ENCODE measurements at regions of chr1 and their contacts with region 1.

Region 1: DNA sequence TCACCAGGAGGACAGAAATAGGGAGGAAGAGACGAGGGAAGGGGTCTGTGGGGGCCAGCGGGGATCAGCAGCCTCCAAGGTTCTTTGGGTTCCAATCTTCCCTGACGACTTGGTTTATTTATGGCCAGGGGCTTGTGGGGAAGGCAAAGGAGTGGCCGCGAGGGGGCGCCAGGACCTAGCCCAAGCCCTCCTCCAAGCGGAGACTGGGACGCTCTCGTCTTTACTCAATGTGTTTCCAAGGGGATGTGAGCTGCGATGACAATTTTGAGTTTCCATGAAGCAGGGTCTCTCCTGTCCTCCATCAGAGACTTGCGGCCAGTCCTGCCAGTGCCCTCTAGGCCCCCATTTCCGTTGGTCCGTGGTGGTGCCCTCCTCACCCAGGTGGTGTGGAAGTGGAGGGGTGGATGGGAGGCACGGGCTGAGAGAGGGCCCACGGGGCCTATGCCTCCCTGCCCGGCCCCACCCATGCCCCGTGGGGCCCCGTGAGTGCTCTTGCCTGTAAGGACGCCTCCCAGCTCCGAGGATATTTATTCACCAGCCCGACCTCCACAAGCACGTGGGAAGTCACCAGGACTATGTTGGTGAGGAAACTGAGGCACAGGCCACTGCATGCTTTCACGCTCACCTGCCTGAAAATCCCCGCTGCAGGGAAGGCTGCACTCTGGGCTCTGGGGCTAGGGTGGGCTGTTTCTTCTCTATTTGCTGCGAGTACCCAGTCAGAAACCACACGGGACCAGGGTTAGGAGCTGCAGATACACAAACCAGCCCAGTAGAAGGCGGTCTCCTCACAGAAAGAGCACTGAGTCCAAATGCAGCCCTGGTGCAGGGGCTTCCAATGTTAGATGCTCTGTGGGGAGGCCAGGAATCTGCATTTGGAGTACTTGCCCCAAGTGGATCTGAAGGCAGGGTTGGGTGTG is 26.5 kb downstream of the DMRTB1 start:
- DNase-seq: peak; percentile 70 to 95
- H3K4me3 ChIP-seq: peak overlapping the region in 1 of 4 experiments; percentile 16; a peak in 1 of 8 replicates
- H3K27ac ChIP-seq: no peak overlapping the region
- H3K4me1 ChIP-seq: peaks cover 0 to 12% (median 3%) of the 10 kb centered on the region in 4 experiments; a peak in 5 of 7 replicates
- H3K27me3 ChIP-seq: peaks cover 0 to 3% (median 2%) of the 10 kb centered on the region in 4 experiments; a peak in 2 of 7 replicates
- CTCF ChIP-seq: peak; percentile 91 to 96 (median 95)
- EP300 ChIP-seq: no peak
- POLR2A ChIP-seq: no peak
- RAD21 ChIP-seq: peak; percentile 95 to 99

Region 2: DNA sequence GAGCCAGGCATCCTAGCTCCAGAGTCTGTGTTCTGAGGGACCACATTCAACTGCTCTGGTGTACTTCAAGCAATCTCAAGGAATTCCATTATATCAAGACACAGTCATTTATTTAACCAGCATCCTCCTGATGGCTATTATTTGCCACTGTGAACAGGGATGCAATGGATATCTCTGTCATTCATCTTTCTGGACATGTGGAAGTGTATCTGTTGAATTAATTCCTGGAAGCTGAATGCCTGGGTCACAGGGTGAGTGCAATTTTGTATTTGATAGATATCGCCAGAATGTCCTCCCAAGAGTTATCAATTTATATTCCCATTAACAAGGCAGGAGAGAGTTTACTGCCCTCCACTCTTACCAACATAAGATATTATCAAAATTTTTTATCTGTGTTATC is 133.2 kb before region 1 on chr1:
- CTCF ChIA-PET with region 1: no interaction called
- POLR2A ChIA-PET with region 1: no interaction called
- DNase-seq: no peak
- H3K4me3 ChIP-seq: no peak overlapping the region
- H3K27ac ChIP-seq: no peak overlapping the region
- H3K4me1 ChIP-seq: peaks cover 0 to 7% (median 1%) of the 10 kb centered on the region in 4 experiments; a peak in 1 of 7 replicates
- H3K27me3 ChIP-seq: no peaks in the 10 kb centered on the region
- CTCF ChIP-seq: no peak
- EP300 ChIP-seq: no peak
- POLR2A ChIP-seq: no peak
- RAD21 ChIP-seq: no peak

Region 3: DNA sequence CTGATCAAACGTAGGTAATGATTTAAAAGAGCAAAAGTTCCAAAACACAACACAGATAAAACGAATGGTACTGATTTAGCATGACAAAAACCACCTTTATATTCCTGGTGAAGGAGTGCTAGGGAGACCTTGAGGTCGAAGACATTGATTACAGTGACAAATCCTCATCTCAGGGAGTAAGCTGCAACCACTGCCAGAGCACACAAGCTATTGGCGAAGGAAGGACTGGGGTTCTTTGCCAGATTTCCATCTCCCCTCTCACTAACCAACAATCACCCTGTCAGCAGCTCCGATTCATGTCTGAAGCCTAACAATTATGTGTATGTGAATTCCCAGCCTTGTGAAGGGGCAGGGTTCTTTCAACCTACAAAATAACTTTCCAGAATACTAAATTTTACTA is 66.7 kb before region 1 on chr1:
- CTCF ChIA-PET with region 1: no interaction called
- POLR2A ChIA-PET with region 1: no interaction called
- DNase-seq: no peak
- H3K4me3 ChIP-seq: no peak overlapping the region
- H3K27ac ChIP-seq: no peak overlapping the region
- H3K4me1 ChIP-seq: peaks cover 4 to 18% (median 11%) of the 10 kb centered on the region in 4 experiments; a peak in 5 of 7 replicates
- H3K27me3 ChIP-seq: no peaks in the 10 kb centered on the region
- CTCF ChIP-seq: no peak
- EP300 ChIP-seq: no peak
- POLR2A ChIP-seq: no peak
- RAD21 ChIP-seq: no peak

Region 4: GRCh38 chr1:53462769-53463501 is 22.8 kb before region 1 on chr1:
- CTCF ChIA-PET with region 1: interaction called, 95 read pairs
- POLR2A ChIA-PET with region 1: no interaction called
- DNase-seq: no peak
- H3K4me3 ChIP-seq: no peak overlapping the region
- H3K27ac ChIP-seq: no peak overlapping the region
- H3K4me1 ChIP-seq: no peaks in the 10 kb centered on the region; a peak in 3 of 7 replicates
- H3K27me3 ChIP-seq: peaks cover 0 to 4% (median 0%) of the 10 kb centered on the region in 4 experiments; a peak in 1 of 7 replicates
- CTCF ChIP-seq: no peak
- EP300 ChIP-seq: no peak
- POLR2A ChIP-seq: no peak
- RAD21 ChIP-seq: no peak

Region 5: DNA sequence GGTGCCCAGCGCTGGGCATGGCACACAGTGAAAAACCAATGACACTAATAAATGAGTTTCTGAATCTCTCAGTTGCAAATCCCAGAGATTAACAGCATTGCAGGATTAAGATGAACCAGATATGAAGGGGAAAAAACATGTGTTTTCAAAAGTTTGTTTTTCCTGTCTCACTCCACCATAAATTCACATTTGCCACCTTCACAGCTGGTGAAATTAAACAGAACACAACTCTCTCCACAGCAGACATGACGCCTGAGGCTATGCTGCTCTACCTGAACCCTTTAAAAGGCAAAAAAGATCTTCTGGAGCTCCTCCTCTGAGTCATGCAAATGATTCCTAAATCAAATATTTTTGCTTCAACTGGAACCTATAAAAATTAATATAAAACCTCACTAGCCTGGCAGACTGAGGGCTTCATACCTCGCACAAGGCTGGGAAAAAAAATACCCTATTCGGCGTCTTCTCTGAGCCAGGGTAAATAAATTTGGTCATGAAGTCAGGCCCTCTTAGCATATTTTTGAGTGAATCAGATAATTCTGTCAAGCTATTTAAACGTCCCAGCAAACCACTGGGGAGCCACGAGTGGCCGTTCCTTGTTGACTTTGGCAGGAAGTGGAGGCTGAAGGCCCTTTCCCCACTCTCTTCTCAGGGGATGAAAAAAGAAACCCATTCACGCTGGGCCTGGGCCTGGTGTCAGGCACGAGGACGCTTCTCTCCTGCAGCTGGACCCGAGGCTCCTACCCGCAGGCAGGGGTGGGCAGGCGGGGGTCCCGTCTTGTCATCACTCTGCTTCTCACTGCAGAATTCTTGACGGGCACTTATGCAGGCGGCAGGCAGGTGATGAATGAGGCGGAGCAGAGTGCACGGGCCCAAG is 26.4 kb after region 1 on chr1:
- CTCF ChIA-PET with region 1: interaction called, 25 read pairs
- POLR2A ChIA-PET with region 1: no interaction called
- DNase-seq: no peak
- H3K4me3 ChIP-seq: no peak overlapping the region
- H3K27ac ChIP-seq: no peak overlapping the region
- H3K4me1 ChIP-seq: peaks cover 0 to 17% (median 3%) of the 10 kb centered on the region in 4 experiments; a peak in 1 of 7 replicates
- H3K27me3 ChIP-seq: no peaks in the 10 kb centered on the region
- CTCF ChIP-seq: no peak
- EP300 ChIP-seq: no peak
- POLR2A ChIP-seq: no peak
- RAD21 ChIP-seq: no peak

Region 6: GRCh38 chr1:53541761-53542550 is 56.2 kb after region 1 on chr1:
- CTCF ChIA-PET with region 1: interaction called, 10 read pairs
- POLR2A ChIA-PET with region 1: no interaction called
- DNase-seq: no peak
- H3K4me3 ChIP-seq: no peak overlapping the region
- H3K27ac ChIP-seq: no peak overlapping the region
- H3K4me1 ChIP-seq: no peaks in the 10 kb centered on the region; a peak in 2 of 7 replicates
- H3K27me3 ChIP-seq: 0 out of 7 replicates have a peak, but pooled peaks cover 0 to 2% (median 0%) of the 10 kb centered on the region in 4 experiments
- CTCF ChIP-seq: peak in 1 of 3 experiments; percentile 40; a peak in 2 of 4 replicates
- EP300 ChIP-seq: no peak
- POLR2A ChIP-seq: no peak
- RAD21 ChIP-seq: no peak

Region 7: DNA sequence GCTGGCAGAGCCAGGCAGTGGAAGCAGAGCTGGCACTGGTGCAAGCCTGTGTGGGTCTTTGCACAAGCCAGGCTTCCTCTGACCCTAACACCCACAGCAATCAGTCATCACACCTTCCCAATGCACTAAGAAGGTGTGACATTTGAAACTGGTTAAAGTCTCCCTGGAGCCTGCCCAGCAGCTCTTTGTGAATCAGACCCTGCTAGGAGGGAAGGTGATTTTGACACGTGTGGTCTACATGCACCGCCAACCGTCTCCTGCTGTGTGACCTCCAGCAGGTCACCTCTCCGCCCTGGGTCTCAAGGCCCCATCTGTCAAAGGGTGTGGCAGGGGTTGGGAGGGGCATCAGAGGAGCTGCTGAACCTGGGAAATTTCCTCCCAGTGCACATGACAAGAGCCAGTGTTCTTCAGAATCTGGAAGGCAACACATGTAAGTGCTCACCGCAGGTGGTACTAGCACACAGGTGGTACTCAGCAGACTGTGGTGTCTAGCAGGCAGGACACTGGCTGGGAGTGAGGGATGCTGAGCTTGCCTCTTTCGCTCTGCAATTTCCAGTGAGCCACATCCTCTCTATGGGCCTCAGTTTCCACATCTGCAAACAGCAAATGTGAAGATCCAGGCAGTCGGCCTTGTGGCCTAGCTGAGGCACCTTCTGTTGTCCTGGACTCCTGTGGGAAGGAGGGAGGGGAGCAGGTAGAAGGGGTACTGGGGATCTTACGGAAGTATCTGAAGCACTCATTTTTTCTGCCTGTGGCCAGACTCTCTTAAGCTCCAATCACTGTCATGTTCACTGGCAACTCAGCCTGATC is 96.7 kb after region 1 on chr1:
- CTCF ChIA-PET with region 1: interaction called, 264 read pairs
- POLR2A ChIA-PET with region 1: no interaction called
- DNase-seq: no peak
- H3K4me3 ChIP-seq: no peak overlapping the region
- H3K27ac ChIP-seq: no peak overlapping the region
- H3K4me1 ChIP-seq: no peaks in the 10 kb centered on the region
- H3K27me3 ChIP-seq: no peaks in the 10 kb centered on the region; a peak in 1 of 7 replicates
- CTCF ChIP-seq: no peak
- EP300 ChIP-seq: no peak
- POLR2A ChIP-seq: no peak
- RAD21 ChIP-seq: no peak

Region 8: GRCh38 chr1:53681977-53682685 is 196.4 kb after region 1 on chr1:
- CTCF ChIA-PET with region 1: interaction called, 129 read pairs
- POLR2A ChIA-PET with region 1: no interaction called
- DNase-seq: peak; percentile 54 to 76
- H3K4me3 ChIP-seq: no peak overlapping the region
- H3K27ac ChIP-seq: no peak overlapping the region
- H3K4me1 ChIP-seq: peaks cover 4 to 15% (median 12%) of the 10 kb centered on the region in 4 experiments
- H3K27me3 ChIP-seq: peaks cover 0 to 11% (median 4%) of the 10 kb centered on the region in 4 experiments; a peak in 3 of 7 replicates
- CTCF ChIP-seq: peak; percentile 94 to 97 (median 95)
- EP300 ChIP-seq: no peak
- POLR2A ChIP-seq: no peak
- RAD21 ChIP-seq: peak; percentile 89 to 95

Region 9: GRCh38 chr1:53715478-53715877 is 229.7 kb after region 1 on chr1:
- CTCF ChIA-PET with region 1: interaction called, 12 read pairs
- POLR2A ChIA-PET with region 1: no interaction called
- DNase-seq: peak; percentile 29 to 84
- H3K4me3 ChIP-seq: no peak overlapping the region
- H3K27ac ChIP-seq: no peak overlapping the region
- H3K4me1 ChIP-seq: no peaks in the 10 kb centered on the region; a peak in 3 of 7 replicates
- H3K27me3 ChIP-seq: no peaks in the 10 kb centered on the region
- CTCF ChIP-seq: peak; percentile 66 to 90 (median 78)
- EP300 ChIP-seq: no peak
- POLR2A ChIP-seq: no peak
- RAD21 ChIP-seq: peak; percentile 45 to 64

Measured in H1 (cell line).